Uterus (tissue), 4 donors: ENCODE measurements at regions of chr18 and their contacts with region 1.

Region 1: GRCh38 chr18:35005963-35006577 is 35.1 kb upstream of the MAPRE2 start:
- DNase-seq: no peak
- H3K4me3 ChIP-seq: no peak overlapping the region
- H3K27ac ChIP-seq: no peak overlapping the region
- H3K4me1 ChIP-seq: no peaks in the 10 kb centered on the region
- H3K27me3 ChIP-seq: no peaks in the 10 kb centered on the region
- CTCF ChIP-seq: peak; percentile 61 to 80 (median 66)
- POLR2A ChIP-seq: no peak

Region 2: GRCh38 chr18:34458410-34458977 is 547.6 kb before region 1 on chr18:
- intact Hi-C with region 1: no loop called
- DNase-seq: no peak
- H3K4me3 ChIP-seq: no peak overlapping the region
- H3K27ac ChIP-seq: no peak overlapping the region
- H3K4me1 ChIP-seq: no peaks in the 10 kb centered on the region
- H3K27me3 ChIP-seq: no peaks in the 10 kb centered on the region
- CTCF ChIP-seq: no peak
- POLR2A ChIP-seq: no peak

Region 3: DNA sequence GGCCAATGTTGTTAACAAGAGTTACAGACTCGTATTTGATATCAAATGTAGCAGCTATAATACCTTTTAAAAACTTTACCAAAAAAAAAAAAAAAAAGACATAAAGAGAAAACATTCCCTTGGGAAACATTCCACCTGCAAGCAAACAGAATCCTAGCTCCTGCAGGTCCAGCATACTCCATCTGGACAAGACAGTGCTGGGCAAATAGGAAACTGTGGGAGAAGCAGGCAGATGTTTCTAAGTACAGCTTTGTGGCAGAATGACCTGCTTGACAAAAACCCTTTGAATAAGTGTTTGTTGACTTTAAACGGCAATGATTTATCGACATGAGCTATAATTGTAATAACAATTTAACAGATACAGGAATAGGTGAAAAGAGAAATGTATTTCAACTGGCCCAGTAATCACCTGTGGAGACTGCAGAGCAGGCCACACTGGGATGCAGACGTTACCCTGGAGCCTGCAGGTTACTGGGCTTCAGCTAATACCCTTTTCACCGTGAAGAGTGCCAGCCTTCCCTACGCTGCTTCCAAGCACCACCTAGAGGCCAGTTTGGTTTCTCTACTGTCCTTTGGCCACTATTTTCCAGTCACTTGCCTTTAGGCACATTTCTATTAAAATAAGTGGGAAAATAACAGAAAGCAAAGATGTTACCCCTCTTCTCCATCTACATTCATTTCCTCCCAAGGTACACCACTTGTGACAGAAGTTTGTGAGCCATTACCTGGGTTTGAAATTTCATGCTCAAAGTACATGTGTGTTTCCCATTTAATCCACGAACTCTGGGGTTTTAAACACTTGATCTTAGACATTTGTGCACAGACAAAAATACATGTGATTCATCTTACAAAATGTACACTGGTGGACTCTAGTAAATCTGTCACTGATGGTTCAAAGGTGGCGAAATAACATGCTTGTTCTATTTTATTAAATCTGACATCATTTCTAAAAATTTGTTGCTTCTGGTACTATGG is 137.8 kb after region 1 on chr18:
- intact Hi-C with region 1: loop called (anchors 5 kb)
- DNase-seq: peak; percentile 48 to 54
- H3K4me3 ChIP-seq: no peak overlapping the region
- H3K27ac ChIP-seq: peak overlapping the region; percentile 75 to 79
- H3K4me1 ChIP-seq: peaks cover 0 to 10% of the 10 kb centered on the region in 2 donors
- H3K27me3 ChIP-seq: no peaks in the 10 kb centered on the region
- CTCF ChIP-seq: peak; percentile 65 to 76 (median 72)
- POLR2A ChIP-seq: no peak

Region 4: DNA sequence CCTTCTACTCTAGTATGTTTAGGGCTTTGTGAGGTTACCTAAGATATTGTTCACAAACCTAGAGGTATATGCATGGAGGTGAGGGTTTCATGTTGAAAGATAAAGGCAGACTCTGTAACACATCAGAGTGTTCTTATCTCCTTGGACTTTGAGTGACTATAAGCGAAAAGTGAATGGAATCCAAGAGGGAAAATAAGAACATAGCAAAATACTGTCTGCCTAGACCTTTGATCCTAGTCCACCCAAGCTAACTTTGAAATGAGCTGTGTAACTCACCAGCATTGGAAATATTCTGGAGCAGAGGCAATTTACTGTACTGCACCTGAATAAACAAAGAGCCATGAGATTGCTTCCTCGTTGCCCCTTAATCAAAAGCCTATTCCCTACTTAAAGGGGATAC is 547.2 kb after region 1 on chr18:
- intact Hi-C with region 1: no loop called
- DNase-seq: no peak
- H3K4me3 ChIP-seq: no peak overlapping the region
- H3K27ac ChIP-seq: no peak overlapping the region
- H3K4me1 ChIP-seq: no peaks in the 10 kb centered on the region
- H3K27me3 ChIP-seq: no peaks in the 10 kb centered on the region
- CTCF ChIP-seq: no peak
- POLR2A ChIP-seq: no peak